ENCODE measurements at regions of chr7 and their contacts with region 1.

Region 1: DNA sequence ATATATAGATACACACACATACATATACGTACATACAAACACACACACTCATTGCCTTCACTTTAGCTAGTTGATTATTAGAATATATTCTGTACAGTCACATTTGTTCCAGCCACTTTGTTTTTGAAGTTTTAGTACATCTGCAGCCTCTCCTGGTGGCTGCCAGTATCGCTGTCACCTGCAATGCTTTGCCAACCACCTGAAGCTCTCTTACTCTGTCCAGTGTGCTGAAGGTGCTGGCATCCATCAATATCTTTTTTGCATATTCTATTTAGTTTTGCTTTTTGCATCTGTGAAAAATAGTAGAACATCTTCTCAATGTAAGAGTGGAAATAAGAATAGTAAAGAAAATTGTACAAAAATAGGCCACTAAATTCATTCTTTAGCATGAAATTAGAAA is 388.6 kb downstream of the EXOC4 start:
- DNase-seq: no peak
- ATAC-seq: no peak
- H3K4me3 ChIP-seq: no peak overlapping the region
- H3K27ac ChIP-seq: no peak overlapping the region
- H3K4me1 ChIP-seq: no peaks in the 10 kb centered on the region
- H3K27me3 ChIP-seq: no peaks in the 10 kb centered on the region
- CTCF ChIP-seq: no peak

Region 2: DNA sequence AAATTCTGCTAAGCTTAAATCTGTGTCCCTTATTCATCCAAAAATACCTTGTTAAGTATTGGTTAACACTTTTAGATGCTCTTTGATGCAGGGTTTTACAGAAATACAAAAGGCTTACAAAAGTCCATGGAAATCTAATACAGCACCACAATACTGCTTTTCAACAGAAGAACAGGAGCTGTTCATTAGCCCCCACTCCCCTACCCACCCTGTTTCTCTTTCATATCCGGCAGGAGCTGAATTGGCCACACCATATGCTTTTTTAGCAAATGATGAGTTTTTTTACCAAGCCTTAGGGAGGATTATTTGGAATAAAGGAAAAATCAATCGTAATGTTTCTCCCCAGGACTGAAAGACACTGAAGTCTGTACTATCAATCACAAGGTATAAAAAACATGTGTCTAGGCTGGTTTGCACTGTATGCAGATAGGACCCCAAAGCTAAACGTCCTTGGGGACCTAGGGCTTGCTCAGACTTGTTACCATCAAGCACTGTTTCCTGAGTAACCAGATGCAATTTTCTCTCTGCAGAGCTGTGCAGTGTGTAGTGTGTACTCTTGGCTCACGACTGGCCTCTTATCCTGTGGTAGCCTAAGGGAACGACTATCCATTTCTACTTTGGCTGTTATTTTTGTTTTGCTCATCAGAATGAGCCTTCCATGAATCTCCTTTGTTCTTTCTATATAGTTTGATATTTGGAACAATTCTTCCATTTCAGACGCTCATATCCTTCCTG is 342.4 kb after region 1 on chr7:
- CTCF ChIA-PET with region 1: no interaction called
- POLR2A ChIA-PET with region 1: interaction called, 21 read pairs
- in situ Hi-C with region 1: no loop called
- intact Hi-C with region 1: no loop called
- DNase-seq: no peak
- ATAC-seq: no peak
- H3K4me3 ChIP-seq: no peak overlapping the region
- H3K27ac ChIP-seq: no peak overlapping the region
- H3K4me1 ChIP-seq: no peaks in the 10 kb centered on the region
- H3K27me3 ChIP-seq: no peaks in the 10 kb centered on the region
- CTCF ChIP-seq: no peak